PC-3 (cell line): ENCODE measurements at regions of chr5 and their contacts with region 1.

Region 1: DNA sequence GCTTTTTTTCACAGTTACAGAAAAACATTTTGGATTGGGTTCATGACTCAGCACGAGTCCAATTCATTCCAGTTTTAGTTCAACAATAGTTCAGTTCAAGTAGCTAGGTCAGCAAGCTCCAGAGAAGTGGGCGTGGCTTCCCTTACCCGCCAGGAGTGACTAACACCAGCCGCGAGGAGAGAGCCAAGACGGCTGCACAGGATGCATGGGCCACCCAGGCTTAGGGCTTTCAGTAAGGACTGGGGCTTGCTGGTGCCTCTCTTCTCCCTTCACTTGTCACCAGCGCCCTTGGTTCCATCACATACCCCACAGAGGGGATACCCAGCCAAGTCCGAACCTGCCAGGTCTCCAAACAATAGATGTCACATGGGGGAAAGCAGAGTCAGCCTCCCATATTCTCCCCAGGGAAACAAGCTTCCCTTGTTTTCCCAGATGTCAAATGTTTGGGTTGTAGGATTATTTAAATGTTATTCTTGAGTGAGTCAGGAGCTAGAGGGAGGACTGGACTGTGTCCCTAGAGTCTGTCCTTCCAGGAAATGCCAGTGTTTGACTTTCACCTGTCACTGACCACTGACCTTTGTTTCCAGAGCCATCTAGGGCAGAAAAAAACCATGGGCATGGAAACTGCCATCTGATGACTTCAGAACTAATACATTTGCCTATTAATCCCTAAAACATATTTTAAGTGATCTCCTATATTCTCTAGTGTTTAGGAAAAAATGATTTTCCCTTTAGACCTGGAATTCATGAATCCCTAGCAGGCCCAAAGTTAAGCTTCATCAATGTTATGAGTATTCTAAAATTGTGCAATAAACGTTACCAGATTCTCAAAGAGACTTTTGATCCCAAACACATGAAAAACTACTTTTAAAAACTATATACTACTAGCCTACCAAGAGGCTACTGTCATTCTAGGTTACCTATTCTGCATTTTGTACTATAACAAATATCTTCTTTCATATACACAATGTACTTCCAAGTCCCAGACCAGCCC is 51.9 kb downstream of the NIPAL4 start:
- DNase-seq: peak; percentile 99
- ATAC-seq: peak; percentile 93
- H3K4me3 ChIP-seq: peak overlapping the region; percentile 6; the same call in 1 of the 2 replicates
- H3K27ac ChIP-seq: peak overlapping the region; percentile 93
- H3K4me1 ChIP-seq: peaks cover 59% of the 10 kb centered on the region
- H3K27me3 ChIP-seq: no peaks in the 10 kb centered on the region
- CTCF ChIP-seq: no peak

Region 2: GRCh38 chr5:157548513-157549297 is 36.8 kb after region 1 on chr5:
- CTCF ChIA-PET with region 1: no interaction called
- POLR2A ChIA-PET with region 1: no interaction called
- intact Hi-C with region 1: loop called (anchors 5 kb)
- DNase-seq: peak; percentile 81
- ATAC-seq: no peak
- H3K4me3 ChIP-seq: peak overlapping the region; percentile 1; the same call in 1 of the 2 replicates
- H3K27ac ChIP-seq: peak overlapping the region; percentile 70
- H3K4me1 ChIP-seq: peaks cover 39% of the 10 kb centered on the region
- H3K27me3 ChIP-seq: no peaks in the 10 kb centered on the region
- CTCF ChIP-seq: no peak

Region 3: GRCh38 chr5:157582731-157583620 is 71.0 kb after region 1 on chr5:
- CTCF ChIA-PET with region 1: no interaction called
- POLR2A ChIA-PET with region 1: interaction called, 13 read pairs
- intact Hi-C with region 1: no loop called
- DNase-seq: no peak
- ATAC-seq: peak; percentile 66
- H3K4me3 ChIP-seq: no peak overlapping the region
- H3K27ac ChIP-seq: no peak overlapping the region
- H3K4me1 ChIP-seq: peaks cover 17% of the 10 kb centered on the region; the same call in 1 of the 2 replicates
- H3K27me3 ChIP-seq: no peaks in the 10 kb centered on the region
- CTCF ChIP-seq: peak; percentile 46; the same call in 1 of the 2 replicates

Region 4: DNA sequence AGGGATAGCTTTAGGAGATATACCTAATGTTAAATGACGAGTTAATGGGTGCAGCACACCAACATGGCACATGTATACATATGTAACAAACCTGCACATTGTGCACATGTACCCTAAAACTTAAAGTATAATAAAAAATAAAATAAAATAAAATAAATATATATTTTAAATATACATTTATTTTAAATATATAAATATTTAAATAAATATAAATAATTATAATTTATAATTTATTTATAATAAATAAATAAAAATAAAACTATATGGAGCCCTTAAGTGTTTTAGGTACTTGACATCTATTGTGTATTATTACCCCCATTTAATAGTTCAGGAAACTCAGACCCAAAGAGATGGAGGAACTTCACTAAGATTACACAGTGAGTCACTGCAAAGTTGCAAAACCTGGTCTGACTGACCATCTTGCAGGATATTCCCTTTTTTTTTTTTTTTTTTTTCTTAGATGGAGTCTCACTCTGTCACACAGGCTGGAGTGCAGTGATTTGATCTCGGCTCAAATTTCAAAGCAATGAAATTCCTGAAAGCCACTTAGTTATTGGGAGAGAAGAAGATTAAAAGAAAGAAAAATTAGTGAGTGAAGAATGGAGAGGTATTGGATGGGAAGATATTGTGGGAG is 153.6 kb after region 1 on chr5:
- CTCF ChIA-PET with region 1: interaction called, 3 read pairs
- POLR2A ChIA-PET with region 1: no interaction called
- intact Hi-C with region 1: loop called (anchors 5 kb)
- DNase-seq: peak; percentile 98
- ATAC-seq: peak; percentile 64
- H3K4me3 ChIP-seq: no peak overlapping the region
- H3K27ac ChIP-seq: peak overlapping the region; percentile 70
- H3K4me1 ChIP-seq: peaks cover 20% of the 10 kb centered on the region
- H3K27me3 ChIP-seq: no peaks in the 10 kb centered on the region
- CTCF ChIP-seq: no peak

Region 5: DNA sequence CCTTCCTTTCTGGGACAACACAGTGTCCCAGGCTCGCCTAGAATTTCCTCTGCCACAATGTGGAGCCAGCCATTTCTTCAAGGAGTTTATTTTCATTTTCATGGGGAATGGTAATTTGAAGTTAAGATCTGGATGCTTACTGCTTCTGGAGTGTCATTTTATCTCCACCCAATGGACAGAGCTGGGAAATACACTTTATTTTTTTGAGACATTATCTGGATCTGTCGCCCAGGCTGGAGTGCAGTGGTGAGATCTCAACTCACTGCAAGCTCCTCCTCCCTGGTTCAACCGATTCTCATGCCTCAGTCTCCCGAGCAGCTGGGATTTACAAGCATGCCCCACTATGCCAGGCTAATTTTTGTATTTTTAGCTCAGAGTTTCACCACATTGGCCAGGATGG is 206.6 kb after region 1 on chr5:
- CTCF ChIA-PET with region 1: no interaction called
- POLR2A ChIA-PET with region 1: interaction called, 6 read pairs
- intact Hi-C with region 1: loop called (anchors 1 kb)
- DNase-seq: peak; percentile 92
- ATAC-seq: peak; percentile 97
- H3K4me3 ChIP-seq: no peak overlapping the region
- H3K27ac ChIP-seq: peak overlapping the region; percentile 58
- H3K4me1 ChIP-seq: peaks cover 20% of the 10 kb centered on the region
- H3K27me3 ChIP-seq: no peaks in the 10 kb centered on the region
- CTCF ChIP-seq: peak; percentile 90